Heart left ventricle (tissue), 16 donors: ENCODE measurements at regions of chr17 and their contacts with region 1.

Region 1: GRCh38 chr17:52276381-52277008 is 118.0 kb upstream of the CA10 start:
- DNase-seq: no peak
- ATAC-seq: no peak
- H3K4me3 ChIP-seq: no peak overlapping the region
- H3K27ac ChIP-seq: no peak overlapping the region
- H3K4me1 ChIP-seq: no peaks in the 10 kb centered on the region
- H3K27me3 ChIP-seq: no peaks in the 10 kb centered on the region
- CTCF ChIP-seq: no peak
- POLR2A ChIP-seq: no peak

Region 2: DNA sequence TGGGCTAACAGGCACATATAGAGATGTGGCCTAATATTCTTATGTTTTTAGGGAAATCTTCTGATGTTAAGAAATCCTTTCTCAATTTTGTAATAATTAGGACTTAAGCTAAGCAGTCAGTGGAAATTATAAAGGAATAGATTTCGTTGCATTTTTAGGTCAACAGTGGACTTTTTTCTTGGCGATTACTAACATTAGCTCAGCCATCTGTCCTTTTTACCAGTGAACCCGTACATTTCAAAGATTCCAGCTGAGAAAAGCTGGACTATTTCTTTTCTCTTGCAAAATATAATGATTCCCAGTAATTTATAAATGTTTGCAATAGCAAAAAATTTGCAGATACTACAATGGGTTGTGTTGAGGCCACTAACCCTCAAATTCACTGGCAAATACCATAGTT is 63.0 kb before region 1 on chr17:
- intact Hi-C with region 1: loop called in 1 of 10 experiments (anchors 10 kb)
- DNase-seq: no peak
- ATAC-seq: no peak
- H3K4me3 ChIP-seq: no peak overlapping the region
- H3K27ac ChIP-seq: no peak overlapping the region
- H3K4me1 ChIP-seq: no peaks in the 10 kb centered on the region
- H3K27me3 ChIP-seq: no peaks in the 10 kb centered on the region
- CTCF ChIP-seq: no peak
- POLR2A ChIP-seq: no peak